AG04449 (cell line): ENCODE measurements at regions of chr17 and their contacts with region 1.

Region 1: DNA sequence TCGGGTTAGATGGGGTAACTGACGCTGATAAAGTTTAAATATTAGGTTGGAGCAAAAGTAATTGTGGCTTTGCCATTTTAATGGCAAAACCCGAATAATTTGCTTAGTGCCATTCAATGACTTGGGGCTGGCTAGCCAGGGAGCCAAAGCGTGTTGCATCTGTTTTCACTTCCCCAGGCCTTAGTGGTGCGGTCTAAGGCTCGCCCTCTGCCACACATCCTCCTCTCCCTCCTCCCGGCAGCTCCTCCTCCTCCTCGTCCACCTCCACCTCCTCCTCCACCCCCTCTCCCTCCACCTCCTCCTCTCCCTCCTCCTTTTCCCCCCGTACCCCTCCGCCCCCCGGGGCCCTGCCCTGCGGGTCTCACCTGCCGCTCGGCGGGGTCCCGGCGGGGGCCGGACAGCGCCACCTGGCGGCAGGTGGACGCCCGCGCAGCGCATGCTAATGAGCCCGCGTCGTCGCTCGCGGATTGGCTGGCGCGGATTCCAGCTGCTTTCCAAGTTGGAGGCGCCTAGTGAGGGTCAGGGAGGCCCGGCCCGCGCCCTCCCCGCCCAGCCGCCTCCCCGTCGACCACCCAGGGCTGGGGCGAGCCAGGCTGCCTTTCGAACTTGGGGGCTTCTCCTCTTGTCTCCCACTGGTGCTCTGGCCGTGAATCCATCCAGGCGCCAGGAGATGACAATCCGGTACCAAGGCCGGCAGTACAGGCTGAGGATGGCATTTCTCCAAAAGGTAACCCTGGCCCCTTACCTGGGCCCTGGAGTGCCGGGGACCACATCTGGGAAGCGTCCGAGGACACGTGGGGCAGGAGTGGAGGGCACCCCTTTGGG is 36.6 kb upstream of the RGS9 start:
- DNase-seq: no peak
- H3K4me3 ChIP-seq: peak overlapping the region; percentile 54
- CTCF ChIP-seq: peak; percentile 91

Region 2: DNA sequence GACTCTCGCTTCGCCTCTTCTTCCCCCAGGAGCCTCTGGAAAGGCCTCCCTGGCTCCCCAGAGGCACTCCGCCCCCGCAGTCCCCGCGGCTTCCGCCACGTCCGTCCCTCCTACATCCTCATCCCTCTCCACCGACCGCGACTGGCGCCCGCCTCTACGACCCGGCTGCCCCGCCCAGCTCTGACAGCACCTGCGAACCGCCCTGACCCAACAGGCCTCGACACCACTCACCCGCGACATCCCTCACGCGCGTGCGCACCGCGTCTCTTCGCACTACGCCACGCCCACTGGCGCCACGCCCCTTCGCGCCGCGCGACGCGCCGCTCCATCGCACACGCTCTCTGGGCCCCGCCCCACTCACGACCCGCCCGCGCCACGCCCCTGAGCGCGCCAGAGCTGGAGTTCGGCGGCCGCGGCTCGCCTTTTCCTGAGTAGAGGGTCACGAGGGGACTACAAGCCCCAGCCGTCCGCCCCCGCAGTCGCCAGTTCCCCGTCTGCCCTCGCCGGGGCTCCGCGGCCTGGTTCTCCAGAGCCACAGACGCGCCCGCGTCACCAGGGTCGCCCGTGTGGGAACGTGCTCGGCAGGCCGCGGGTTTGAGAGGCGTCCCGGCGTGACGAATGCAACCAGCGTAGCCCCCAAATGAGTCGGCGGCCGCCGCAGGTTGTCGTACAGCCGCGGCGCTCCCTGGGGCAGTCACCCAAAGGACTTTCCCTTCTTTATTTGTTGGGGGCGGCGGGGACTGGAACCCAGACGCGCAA is 125.0 kb before region 1 on chr17:
- CTCF ChIA-PET with region 1: interaction called, 11 read pairs
- POLR2A ChIA-PET with region 1: interaction called, 3 read pairs
- DNase-seq: no peak
- H3K4me3 ChIP-seq: peak overlapping the region; percentile 71
- CTCF ChIP-seq: no peak

Region 3: DNA sequence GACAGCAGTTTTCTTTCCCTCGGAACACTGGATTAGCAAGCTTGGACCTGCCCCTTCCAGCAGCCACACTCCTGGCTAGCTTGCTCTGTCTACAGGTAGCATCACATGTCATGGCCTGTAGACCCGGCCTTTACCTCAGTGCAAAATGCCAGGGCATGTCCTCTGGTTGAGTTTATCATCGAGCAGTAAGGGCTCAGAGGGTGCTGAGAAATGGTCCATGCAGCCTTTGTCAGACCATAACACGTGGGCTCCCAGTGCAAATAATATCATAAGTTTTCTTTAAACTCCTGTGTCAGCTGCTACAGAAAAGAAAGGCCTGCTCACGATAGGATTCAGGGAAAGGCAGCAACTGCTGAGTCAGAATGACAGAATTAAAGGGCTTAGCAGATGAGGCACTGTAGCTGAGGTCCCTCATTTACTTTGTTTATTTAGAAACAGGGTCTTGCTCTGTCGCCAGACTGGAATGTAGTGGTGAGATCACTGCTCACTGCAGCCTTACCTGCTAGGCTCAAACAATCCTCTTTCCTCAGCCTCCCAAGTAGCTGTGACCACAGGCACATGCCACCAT is 36.0 kb before region 1 on chr17:
- CTCF ChIA-PET with region 1: interaction called, 30 read pairs
- POLR2A ChIA-PET with region 1: no interaction called
- DNase-seq: no peak
- H3K4me3 ChIP-seq: no peak overlapping the region
- CTCF ChIP-seq: no peak

Region 4: DNA sequence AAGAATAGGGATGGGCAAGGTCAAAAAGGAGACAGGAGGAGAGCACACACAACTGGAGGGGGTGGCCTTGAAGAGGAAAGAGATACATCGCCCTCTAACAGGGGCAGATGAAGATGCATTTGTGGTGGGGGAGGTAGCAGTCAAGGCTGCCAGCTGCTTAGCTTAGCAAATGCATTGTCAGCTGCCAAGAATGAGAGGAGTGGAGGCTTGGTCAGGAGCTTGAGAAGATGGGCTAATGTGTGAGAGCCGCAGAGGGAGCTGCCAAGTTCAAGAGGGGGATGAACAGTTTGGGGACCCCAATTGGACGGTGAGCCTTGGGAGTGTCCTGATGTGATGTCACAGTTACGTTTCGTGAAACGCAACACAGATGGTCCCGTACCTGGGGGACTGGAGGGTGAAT is 15.1 kb before region 1 on chr17:
- CTCF ChIA-PET with region 1: interaction called, 100 read pairs
- POLR2A ChIA-PET with region 1: no interaction called
- DNase-seq: no peak
- H3K4me3 ChIP-seq: no peak overlapping the region
- CTCF ChIP-seq: no peak

Region 5: DNA sequence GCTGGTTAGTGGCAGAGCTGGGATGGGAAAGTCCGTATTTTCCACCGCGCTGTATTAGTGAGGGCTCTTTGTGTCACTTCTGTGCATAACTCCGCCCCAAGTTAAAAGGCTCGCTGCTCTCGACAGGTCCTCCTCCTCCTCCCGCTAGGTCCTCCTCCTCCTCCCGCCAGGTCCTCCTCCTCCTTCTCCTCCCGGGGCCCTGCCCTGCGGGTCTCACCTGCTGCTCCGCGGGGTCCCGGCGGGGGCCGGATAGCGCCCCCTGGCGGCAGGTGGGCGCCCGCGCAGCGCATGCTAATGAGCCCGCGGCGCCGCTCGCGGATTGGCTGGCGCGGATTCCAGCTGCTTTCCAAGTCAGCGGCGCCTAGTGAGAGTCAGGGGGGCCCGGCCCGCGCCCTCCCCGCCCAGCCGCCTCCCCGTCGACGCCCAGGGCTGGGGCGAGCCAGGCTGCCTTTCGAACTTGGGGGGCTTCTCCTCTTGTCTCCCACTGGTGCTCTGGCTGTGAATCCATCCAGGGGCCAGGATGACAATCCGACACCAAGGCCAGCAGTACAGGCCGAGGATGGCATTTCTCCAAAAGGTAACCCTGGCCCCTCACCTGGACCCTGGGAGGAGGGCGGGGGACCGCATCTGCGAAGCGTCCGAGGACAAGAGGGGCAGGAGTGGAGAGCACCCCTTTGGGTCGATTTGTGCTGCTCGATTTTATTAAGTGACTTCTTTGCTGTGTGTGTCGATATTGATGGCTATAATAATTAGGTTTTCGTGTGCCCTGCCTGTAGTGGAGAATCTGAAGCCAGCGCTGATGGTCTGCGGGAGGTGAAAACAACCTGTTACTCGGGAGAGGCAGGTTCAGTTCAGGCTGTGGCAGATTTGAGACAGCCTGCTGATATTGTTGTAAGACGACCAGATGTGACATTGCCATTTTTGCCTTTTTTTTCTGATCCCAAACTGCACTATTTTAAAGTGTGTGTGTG is 36.8 kb after region 1 on chr17 and contains the start of gene RGS9:
- CTCF ChIA-PET with region 1: interaction called, 41 read pairs
- POLR2A ChIA-PET with region 1: no interaction called
- DNase-seq: no peak
- H3K4me3 ChIP-seq: peak within 1 kb of the TSS; percentile 50
- CTCF ChIP-seq: peak; percentile 85